ENCODE measurements at regions of chr19 and their contacts with region 1.

Region 1: GRCh38 chr19:55301459-55302317 is 17.9 kb downstream of the BRSK1 start:
- DNase-seq: peak; percentile 97
- ATAC-seq: peak; percentile 94
- H3K4me3 Mint-ChIP-seq: peak overlapping the region; percentile 80
- H3K27ac Mint-ChIP-seq: peak overlapping the region; percentile 89
- H3K4me1 Mint-ChIP-seq: peaks cover 18% of the 10 kb centered on the region
- H3K27me3 Mint-ChIP-seq: peaks cover 3% of the 10 kb centered on the region

Region 2: GRCh38 chr19:55241143-55242088 is 60.3 kb before region 1 on chr19:
- CTCF ChIA-PET with region 1: no interaction called
- POLR2A ChIA-PET with region 1: no interaction called
- DNase-seq: no peak
- ATAC-seq: no peak
- H3K4me3 Mint-ChIP-seq: no peak overlapping the region
- H3K27ac Mint-ChIP-seq: no peak overlapping the region
- H3K4me1 Mint-ChIP-seq: peaks cover 3% of the 10 kb centered on the region
- H3K27me3 Mint-ChIP-seq: no peaks in the 10 kb centered on the region

Region 3: GRCh38 chr19:55258828-55259539 is 42.7 kb before region 1 on chr19 and contains the start of gene PPP6R1:
- CTCF ChIA-PET with region 1: interaction called, 24 read pairs
- POLR2A ChIA-PET with region 1: interaction called, 6 read pairs
- DNase-seq: peak; percentile 95
- ATAC-seq: peak; percentile 76
- H3K4me3 Mint-ChIP-seq: peak within 1 kb of the TSS; percentile 91
- H3K27ac Mint-ChIP-seq: peak within 1 kb of the TSS; percentile 100
- H3K4me1 Mint-ChIP-seq: peaks cover 26% of the 10 kb centered on the region
- H3K27me3 Mint-ChIP-seq: no peaks in the 10 kb centered on the region
- total RNA-seq, gene PPP6R1: 256 to 265 TPM

Region 4: GRCh38 chr19:55279770-55280643 is 21.7 kb before region 1 on chr19 and contains the start of gene HSPBP1:
- CTCF ChIA-PET with region 1: interaction called, 34 read pairs
- POLR2A ChIA-PET with region 1: interaction called, 3 read pairs
- DNase-seq: peak; percentile 98
- ATAC-seq: peak; percentile 87
- H3K4me3 Mint-ChIP-seq: peak within 1 kb of the TSS; percentile 100
- H3K27ac Mint-ChIP-seq: peak within 1 kb of the TSS; percentile 99
- H3K4me1 Mint-ChIP-seq: peaks cover 49% of the 10 kb centered on the region
- H3K27me3 Mint-ChIP-seq: peaks cover 9% of the 10 kb centered on the region
- total RNA-seq, gene HSPBP1: 31.1 to 32.7 TPM

Region 5: DNA sequence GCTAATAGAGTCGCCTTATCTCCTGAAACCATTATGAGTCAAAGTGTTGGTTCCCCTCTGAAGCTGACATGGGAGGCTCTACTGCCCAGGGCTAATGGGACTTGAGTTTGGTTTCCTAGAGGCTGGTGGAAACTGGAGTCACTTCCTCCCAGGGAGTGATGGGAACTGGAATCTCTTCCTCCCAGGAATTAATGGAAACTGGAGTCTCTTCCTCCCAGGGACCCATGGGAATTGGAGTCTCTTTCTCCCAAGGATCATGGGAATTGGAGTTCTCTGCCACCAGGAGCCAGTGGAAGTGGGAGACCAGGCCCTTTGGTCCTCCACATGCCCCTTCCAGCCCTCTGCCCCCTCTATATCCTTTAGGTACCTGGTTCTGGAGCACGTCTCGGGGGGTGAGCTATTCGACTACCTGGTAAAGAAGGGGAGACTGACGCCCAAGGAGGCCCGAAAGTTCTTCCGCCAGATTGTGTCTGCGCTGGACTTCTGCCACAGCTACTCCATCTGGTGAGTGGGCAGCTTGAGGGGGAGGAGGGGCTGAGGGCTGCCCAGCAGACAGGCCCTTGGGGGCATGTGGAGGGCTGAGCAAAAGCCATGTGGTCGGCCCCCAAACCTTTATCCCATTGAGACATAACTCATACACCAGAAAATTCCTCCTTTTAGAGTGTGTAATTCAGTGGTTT is 12.4 kb before region 1 on chr19:
- CTCF ChIA-PET with region 1: interaction called, 67 read pairs
- POLR2A ChIA-PET with region 1: interaction called, 3 read pairs
- DNase-seq: no peak
- ATAC-seq: no peak
- H3K4me3 Mint-ChIP-seq: no peak overlapping the region
- H3K27ac Mint-ChIP-seq: no peak overlapping the region
- H3K4me1 Mint-ChIP-seq: peaks cover 13% of the 10 kb centered on the region
- H3K27me3 Mint-ChIP-seq: no peaks in the 10 kb centered on the region

Region 6: DNA sequence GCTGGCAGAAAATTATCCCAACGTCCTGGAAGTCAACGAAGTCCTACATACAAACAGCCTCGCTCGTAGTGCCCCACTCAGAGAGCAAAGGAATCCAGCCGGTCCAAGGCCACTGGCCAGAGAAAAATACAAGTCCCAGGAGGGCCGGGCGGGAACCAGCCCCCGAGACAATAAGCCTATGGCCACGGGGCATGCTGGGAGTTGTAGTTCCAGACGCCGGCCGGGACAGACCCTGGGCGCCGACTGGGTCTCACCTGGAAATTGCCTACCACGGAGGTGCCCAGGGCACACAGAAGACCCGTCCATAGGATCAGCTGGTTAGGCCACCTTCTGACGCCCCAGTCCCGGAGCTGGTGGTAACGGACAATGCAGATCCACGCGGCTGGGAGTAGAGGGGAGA is 18.1 kb after region 1 on chr19:
- CTCF ChIA-PET with region 1: interaction called, 27 read pairs
- POLR2A ChIA-PET with region 1: no interaction called
- DNase-seq: no peak
- ATAC-seq: no peak
- H3K4me3 Mint-ChIP-seq: no peak overlapping the region
- H3K27ac Mint-ChIP-seq: no peak overlapping the region
- H3K4me1 Mint-ChIP-seq: peaks cover 14% of the 10 kb centered on the region
- H3K27me3 Mint-ChIP-seq: no peaks in the 10 kb centered on the region

Region 7: DNA sequence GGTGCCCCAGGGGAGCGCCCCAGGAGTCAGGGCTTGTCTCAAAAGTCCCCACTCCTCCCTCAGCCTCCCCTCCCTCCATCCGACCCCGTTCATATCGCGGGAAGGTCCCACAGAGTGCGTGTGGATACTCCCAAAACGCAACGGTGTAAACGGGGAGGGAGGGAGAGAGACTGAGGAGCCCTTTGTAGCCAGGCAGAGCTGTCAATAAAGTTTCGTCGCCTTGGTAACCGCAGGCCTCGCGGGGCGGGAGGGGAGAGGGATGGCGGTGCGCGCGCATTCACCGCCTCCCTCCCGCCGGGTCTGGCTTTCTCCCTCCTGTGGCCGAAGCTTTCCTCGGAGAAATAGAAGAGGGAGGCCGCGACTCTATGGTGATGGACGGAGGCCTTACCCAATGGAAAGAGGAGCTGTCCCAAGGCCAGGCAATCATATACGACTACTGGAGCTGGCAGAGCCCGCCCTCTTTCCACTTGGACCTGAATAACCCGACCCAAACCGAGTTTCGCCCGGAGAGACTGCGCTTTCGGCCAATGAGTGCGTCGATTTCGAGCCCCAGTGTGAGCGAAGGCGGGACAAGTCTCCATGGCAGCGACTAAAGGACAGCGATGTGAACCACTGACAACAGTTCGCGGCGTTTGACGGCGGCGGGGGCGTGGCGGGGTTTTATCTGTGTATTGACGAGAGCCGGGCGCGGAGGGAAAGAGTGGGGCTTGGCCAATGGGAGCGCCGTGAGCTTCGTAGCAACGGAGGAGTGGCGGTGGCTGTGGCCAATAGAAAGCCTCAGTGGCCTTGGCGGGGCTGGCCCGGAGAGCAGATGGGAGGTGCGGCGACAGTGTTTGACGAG is 37.6 kb after region 1 on chr19 and contains the start of gene KMT5C:
- CTCF ChIA-PET with region 1: interaction called, 46 read pairs
- POLR2A ChIA-PET with region 1: interaction called, 12 read pairs
- DNase-seq: peak; percentile 100
- ATAC-seq: peak; percentile 86
- H3K4me3 Mint-ChIP-seq: peak within 1 kb of the TSS; percentile 89
- H3K27ac Mint-ChIP-seq: peak within 1 kb of the TSS; percentile 95
- H3K4me1 Mint-ChIP-seq: peaks cover 20% of the 10 kb centered on the region
- H3K27me3 Mint-ChIP-seq: peaks cover 9% of the 10 kb centered on the region
- total RNA-seq, gene KMT5C: 21.9 to 26.7 TPM

Region 8: DNA sequence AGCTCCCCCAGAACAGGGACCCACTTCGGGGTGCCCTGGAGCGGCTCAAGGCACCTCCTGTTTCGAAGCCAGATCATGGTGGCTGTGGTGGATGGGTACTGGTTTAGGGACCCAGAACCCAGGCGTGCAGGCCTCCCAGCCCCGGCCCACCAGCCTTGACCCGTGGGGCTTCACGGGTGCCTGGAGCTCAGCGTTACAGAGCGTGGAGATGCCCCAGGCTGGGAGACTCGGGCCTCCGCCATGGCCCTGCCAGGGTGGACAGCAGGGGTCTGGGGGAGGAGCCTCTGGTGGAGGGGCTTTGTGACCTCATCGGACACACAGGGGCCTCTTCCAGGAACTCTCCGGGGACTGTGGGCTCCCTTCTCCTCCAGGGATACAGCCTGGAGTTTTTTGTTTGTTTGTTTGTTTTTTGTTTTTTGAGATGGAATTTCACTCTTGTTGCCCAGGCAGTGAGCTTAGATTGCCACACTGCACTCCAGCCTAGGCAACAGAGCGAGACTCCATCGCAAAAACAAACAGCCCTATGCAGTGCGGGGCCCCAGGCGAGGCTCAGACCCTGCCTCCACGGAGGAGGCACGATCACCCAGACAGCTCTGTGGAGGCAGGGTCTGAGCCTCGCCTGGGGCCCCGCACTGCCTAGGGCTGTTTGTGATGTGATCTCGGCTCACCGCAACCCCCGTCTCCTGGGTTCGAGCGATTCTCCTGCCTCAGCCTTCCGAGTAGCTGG is 61.5 kb after region 1 on chr19 and contains the start of gene GARIN5B:
- CTCF ChIA-PET with region 1: no interaction called
- POLR2A ChIA-PET with region 1: no interaction called
- DNase-seq: no peak
- ATAC-seq: no peak
- H3K4me3 Mint-ChIP-seq: no peak within 1 kb of the TSS
- H3K27ac Mint-ChIP-seq: no peak within 1 kb of the TSS
- H3K4me1 Mint-ChIP-seq: no peaks in the 10 kb centered on the region
- H3K27me3 Mint-ChIP-seq: peaks cover 6% of the 10 kb centered on the region
- total RNA-seq, gene GARIN5B: not detected

Region 9: GRCh38 chr19:55426042-55426441 is 124.4 kb after region 1 on chr19:
- CTCF ChIA-PET with region 1: no interaction called
- POLR2A ChIA-PET with region 1: no interaction called
- DNase-seq: no peak
- ATAC-seq: no peak
- H3K4me3 Mint-ChIP-seq: no peak overlapping the region
- H3K27ac Mint-ChIP-seq: no peak overlapping the region
- H3K4me1 Mint-ChIP-seq: peaks cover 8% of the 10 kb centered on the region
- H3K27me3 Mint-ChIP-seq: peaks cover 17% of the 10 kb centered on the region